ENCODE measurements at regions of chr20 and their contacts with region 1.

Region 1: GRCh38 chr20:32031007-32031958 is 20.8 kb upstream of the HCK start:
- DNase-seq: peak; percentile 67 to 72 (median 72)
- ATAC-seq: peak; percentile 82
- H3K4me3 ChIP-seq: no peak overlapping the region
- H3K27ac ChIP-seq: no peak overlapping the region
- H3K4me1 ChIP-seq: peaks cover 0 to 11% of the 10 kb centered on the region in 2 experiments; a peak in 4 of 5 replicates
- H3K27me3 ChIP-seq: peaks cover 6 to 49% of the 10 kb centered on the region in 2 experiments; a peak in 4 of 5 replicates
- CTCF ChIP-seq: peak; percentile 92 to 98 (median 98)
- EP300 ChIP-seq: no peak
- POLR2A ChIP-seq: no peak
- RAD21 ChIP-seq: peak; percentile 86 to 87

Region 2: DNA sequence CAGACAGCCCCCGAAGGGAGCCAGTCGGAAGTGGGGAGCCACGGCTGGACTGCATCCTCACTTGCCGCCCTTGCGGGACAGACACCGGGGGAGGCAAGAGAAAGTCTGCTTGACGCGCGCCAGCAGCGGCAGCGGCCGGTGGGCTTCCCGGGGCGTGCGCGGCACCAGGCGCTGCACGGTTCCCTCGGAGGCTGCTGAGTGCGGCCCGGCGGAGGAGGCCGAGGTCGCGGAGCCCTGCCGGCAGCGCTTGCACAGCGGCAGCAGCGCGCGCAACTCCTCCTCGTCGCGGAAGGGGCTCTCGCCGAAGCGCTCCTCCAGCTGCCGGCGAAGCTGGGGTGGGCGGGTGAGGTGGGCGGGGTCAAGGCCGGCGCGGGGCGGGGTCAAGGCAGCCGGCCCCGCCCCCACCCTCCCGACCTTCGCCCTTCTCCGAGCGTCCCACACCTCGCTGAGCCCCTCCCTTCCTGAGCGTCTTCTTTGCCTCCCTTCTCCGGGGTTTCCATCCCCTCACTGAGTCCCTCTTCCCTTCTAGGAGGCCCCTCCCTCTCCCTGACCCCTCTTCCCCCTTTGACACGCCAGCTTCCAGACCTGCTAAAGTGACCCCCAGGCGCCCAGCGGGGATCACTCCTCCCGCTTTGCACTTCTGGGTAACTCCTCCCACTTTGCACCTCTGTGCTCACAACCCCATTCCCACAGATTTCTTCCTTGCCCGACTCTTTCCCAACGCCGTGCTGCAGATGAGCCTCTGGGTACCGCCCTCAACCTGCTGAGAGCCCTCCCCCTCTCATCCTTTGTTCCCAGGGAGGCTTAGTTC is 169.7 kb before region 1 on chr20:
- CTCF ChIA-PET with region 1: no interaction called
- POLR2A ChIA-PET with region 1: no interaction called
- in situ Hi-C with region 1: loop called (anchors 10 kb)
- intact Hi-C with region 1: no loop called
- DNase-seq: peak; percentile 78 to 99 (median 98)
- ATAC-seq: peak; percentile 98
- H3K4me3 ChIP-seq: peak overlapping the region; percentile 40
- H3K27ac ChIP-seq: no peak overlapping the region
- H3K4me1 ChIP-seq: peaks cover 0 to 17% of the 10 kb centered on the region in 2 experiments; a peak in 3 of 5 replicates
- H3K27me3 ChIP-seq: peaks cover 23 to 67% of the 10 kb centered on the region in 2 experiments
- CTCF ChIP-seq: no peak
- EP300 ChIP-seq: no peak
- POLR2A ChIP-seq: no peak
- RAD21 ChIP-seq: no peak

Region 3: GRCh38 chr20:32091888-32092346 is 60.6 kb after region 1 on chr20:
- CTCF ChIA-PET with region 1: interaction called, 4 read pairs
- POLR2A ChIA-PET with region 1: no interaction called
- in situ Hi-C with region 1: no loop called
- intact Hi-C with region 1: loop called (anchors 1 kb)
- DNase-seq: peak; percentile 78 to 81 (median 79)
- ATAC-seq: peak; percentile 97
- H3K4me3 ChIP-seq: no peak overlapping the region
- H3K27ac ChIP-seq: no peak overlapping the region
- H3K4me1 ChIP-seq: no peaks in the 10 kb centered on the region; a peak in 2 of 5 replicates
- H3K27me3 ChIP-seq: peaks cover 20 to 51% of the 10 kb centered on the region in 2 experiments
- CTCF ChIP-seq: peak; percentile 88 to 94 (median 88)
- EP300 ChIP-seq: no peak
- POLR2A ChIP-seq: no peak
- RAD21 ChIP-seq: peak; percentile 65 to 69